ENCODE measurements at regions of chr22 and their contacts with region 1.

Region 1: GRCh38 chr22:30005213-30005857 is 74.9 kb upstream of the HORMAD2 start:
- DNase-seq: peak in 4 of 5 donors; percentile 55 to 69 (median 61)
- ATAC-seq: peak; percentile 53 to 91 (median 88)
- H3K4me3 ChIP-seq: no peak overlapping the region
- H3K27ac ChIP-seq: no peak overlapping the region
- H3K4me1 ChIP-seq: peaks cover 0 to 17% (median 9%) of the 10 kb centered on the region in 12 donors
- H3K27me3 ChIP-seq: no peaks in the 10 kb centered on the region
- CTCF ChIP-seq: peak; percentile 90 to 99 (median 96)
- POLR2A ChIP-seq: no peak

Region 2: DNA sequence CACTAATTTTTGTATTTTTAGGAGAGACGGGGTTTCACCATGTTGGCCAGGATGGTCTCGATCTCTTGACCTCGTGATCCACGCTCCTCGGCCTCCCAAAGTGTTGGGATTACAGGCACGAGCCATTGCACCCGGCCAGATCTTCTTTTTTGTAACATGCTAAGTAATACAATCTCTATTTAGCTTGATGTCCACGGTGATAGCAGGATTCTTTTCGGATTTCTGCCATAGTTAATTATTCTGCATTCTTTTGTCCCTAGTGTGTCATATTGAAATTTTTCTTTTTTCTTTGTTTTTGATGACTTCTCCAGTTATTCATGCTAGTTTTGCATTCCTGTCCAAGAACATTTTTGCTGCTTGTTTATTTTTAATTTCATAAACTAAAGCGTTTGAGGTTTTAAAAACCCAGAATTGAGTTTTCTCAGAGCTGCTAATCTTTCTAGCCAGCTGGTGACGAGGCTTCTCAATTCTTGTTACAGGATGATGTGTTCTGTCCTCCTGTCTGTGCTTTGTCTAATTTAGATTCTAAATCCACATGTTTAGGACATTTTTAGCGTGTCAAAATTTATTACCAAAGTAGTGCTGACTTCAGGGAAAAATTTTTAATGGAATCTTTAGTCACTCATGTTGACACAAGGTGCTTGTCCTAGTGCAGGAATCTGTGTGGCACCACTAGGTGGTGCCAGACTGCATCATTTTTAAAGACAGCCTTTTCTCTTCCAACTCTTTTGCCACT is 380.1 kb before region 1 on chr22:
- intact Hi-C with region 1: loop called in 2 of 10 experiments (anchors 10 kb)
- DNase-seq: peak in 1 of 5 donors; percentile 42
- ATAC-seq: peak in 2 of 4 donors; percentile 49 to 63
- H3K4me3 ChIP-seq: no peak overlapping the region
- H3K27ac ChIP-seq: peak overlapping the region in 1 of 12 donors; percentile 13
- H3K4me1 ChIP-seq: peaks cover 0 to 61% (median 26%) of the 10 kb centered on the region in 12 donors
- H3K27me3 ChIP-seq: no peaks in the 10 kb centered on the region
- CTCF ChIP-seq: peak; percentile 65 to 91 (median 82)
- POLR2A ChIP-seq: no peak

Region 3: GRCh38 chr22:29689880-29690213 is 315.5 kb before region 1 on chr22:
- intact Hi-C with region 1: loop called in 5 of 10 experiments (anchors 5 to 10 kb)
- DNase-seq: peak; percentile 45 to 76 (median 59)
- ATAC-seq: peak in 3 of 4 donors; percentile 66 to 77 (median 74)
- H3K4me3 ChIP-seq: no peak overlapping the region
- H3K27ac ChIP-seq: no peak overlapping the region
- H3K4me1 ChIP-seq: peaks cover 0 to 4% (median 0%) of the 10 kb centered on the region in 12 donors
- H3K27me3 ChIP-seq: no peaks in the 10 kb centered on the region
- CTCF ChIP-seq: peak; percentile 51 to 78 (median 64)
- POLR2A ChIP-seq: no peak

Region 4: GRCh38 chr22:29837780-29838598 is 167.3 kb before region 1 on chr22 and contains the start of gene ASCC2:
- intact Hi-C with region 1: loop called in 7 of 10 experiments (anchors 2 to 10 kb)
- DNase-seq: peak; percentile 99 to 100 (median 99)
- ATAC-seq: peak; percentile 98 to 100 (median 99)
- H3K4me3 ChIP-seq: peak within 1 kb of the TSS; percentile 70 to 98 (median 88)
- H3K27ac ChIP-seq: peak within 1 kb of the TSS; percentile 56 to 94 (median 80)
- H3K4me1 ChIP-seq: peaks cover 3 to 47% (median 23%) of the 10 kb centered on the region in 12 donors
- H3K27me3 ChIP-seq: no peaks in the 10 kb centered on the region
- CTCF ChIP-seq: peak in 2 of 12 donors; percentile 9 to 13
- POLR2A ChIP-seq: peak; percentile 16 to 89
- total RNA-seq, gene ASCC2: 23.6 to 53.2 (median 30.4) TPM

Region 5: GRCh38 chr22:29883045-29883774 is 122.1 kb before region 1 on chr22 and contains the start of gene MTMR3:
- intact Hi-C with region 1: loop called in 4 of 10 experiments (anchors 5 to 10 kb)
- DNase-seq: peak; percentile 94 to 97 (median 95)
- ATAC-seq: peak; percentile 79 to 95 (median 90)
- H3K4me3 ChIP-seq: peak within 1 kb of the TSS; percentile 45 to 98 (median 85)
- H3K27ac ChIP-seq: peak within 1 kb of the TSS; percentile 87 to 98 (median 96)
- H3K4me1 ChIP-seq: peaks cover 6 to 52% (median 36%) of the 10 kb centered on the region in 12 donors
- H3K27me3 ChIP-seq: no peaks in the 10 kb centered on the region
- CTCF ChIP-seq: peak in 11 of 12 donors; percentile 18 to 74 (median 50)
- POLR2A ChIP-seq: peak in 1 of 2 donors; percentile 64
- total RNA-seq, gene MTMR3: 26.1 to 44.8 (median 36.7) TPM

Region 6: DNA sequence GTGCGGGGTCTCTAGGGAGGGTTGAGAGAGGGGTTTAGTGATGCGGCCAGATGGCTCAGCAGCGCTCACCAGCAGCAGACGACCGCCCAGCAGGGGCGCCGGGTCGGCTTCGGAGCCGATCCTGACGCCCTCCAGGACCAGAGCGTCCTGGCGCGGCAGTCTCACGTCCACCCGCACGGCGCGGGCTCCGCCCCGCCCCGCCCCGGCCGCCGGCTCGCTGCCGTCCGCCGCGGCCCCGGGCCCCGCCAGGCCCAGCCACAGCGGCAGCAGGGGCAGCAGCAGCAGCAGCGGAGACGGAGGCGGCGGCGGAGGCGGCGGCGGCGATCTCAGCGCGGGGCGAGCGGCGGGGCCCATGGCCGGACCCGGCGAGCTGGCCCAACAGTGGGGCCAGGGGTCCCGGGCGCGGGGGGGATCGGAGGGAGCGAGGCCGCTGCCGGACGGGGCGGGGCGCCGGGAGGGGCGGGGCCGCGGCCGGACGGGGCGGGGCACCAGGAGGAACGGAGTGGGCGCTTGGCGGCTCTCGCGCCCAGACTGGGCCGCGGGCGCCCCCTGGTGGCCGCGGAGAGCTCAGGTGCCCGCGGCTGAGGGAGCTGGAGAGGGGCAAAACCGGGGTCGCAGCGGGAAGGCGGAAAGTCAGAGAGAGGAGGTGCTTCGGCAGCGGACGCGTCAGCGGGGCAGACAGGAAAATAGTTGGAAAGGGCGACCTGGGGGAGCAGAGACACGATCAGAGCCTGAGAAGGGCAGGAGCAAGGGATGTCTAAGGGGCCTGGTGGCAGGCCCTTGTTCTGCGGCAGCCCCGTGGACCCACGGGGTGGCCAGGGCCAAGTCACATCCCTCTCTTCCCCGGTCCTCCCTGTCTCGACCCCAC is 381.9 kb after region 1 on chr22 and contains the start of gene RNF215:
- intact Hi-C with region 1: no loop called
- DNase-seq: peak; percentile 78 to 92 (median 85)
- ATAC-seq: peak; percentile 68 to 94 (median 92)
- H3K4me3 ChIP-seq: peak within 1 kb of the TSS; percentile 11 to 88 (median 62)
- H3K27ac ChIP-seq: peak within 1 kb of the TSS in 10 of 12 donors; percentile 53 to 85 (median 67)
- H3K4me1 ChIP-seq: peaks cover 0 to 24% (median 9%) of the 10 kb centered on the region in 12 donors
- H3K27me3 ChIP-seq: no peaks in the 10 kb centered on the region
- CTCF ChIP-seq: peak; percentile 81 to 99 (median 94)
- POLR2A ChIP-seq: no peak
- total RNA-seq, gene RNF215: 3.3 to 12.2 (median 6.7) TPM